Endothelial cell of umbilical vein (primary cell): ENCODE measurements at regions of chr12 and their contacts with region 1.

Region 1: GRCh38 chr12:100554608-100555077 is 18.8 kb upstream of the GAS2L3 start:
- DNase-seq: peak; percentile 96
- H3K4me3 ChIP-seq: no peak overlapping the region
- H3K27ac ChIP-seq: no peak overlapping the region
- H3K4me1 ChIP-seq: peaks cover 3% of the 10 kb centered on the region
- H3K27me3 ChIP-seq: peaks cover 2% of the 10 kb centered on the region in 2 experiments
- CTCF ChIP-seq: peak; percentile 66
- POLR2A ChIP-seq: no peak

Region 2: GRCh38 chr12:99043319-99043914 is 1511.2 kb before region 1 on chr12:
- CTCF ChIA-PET with region 1: interaction called, 30 read pairs
- POLR2A ChIA-PET with region 1: no interaction called
- dilution Hi-C with region 1: no loop called
- intact Hi-C with region 1: loop called (anchors 1 kb)
- DNase-seq: peak; percentile 63
- H3K4me3 ChIP-seq: no peak overlapping the region
- H3K27ac ChIP-seq: no peak overlapping the region
- H3K4me1 ChIP-seq: no peaks in the 10 kb centered on the region
- H3K27me3 ChIP-seq: no peaks in the 10 kb centered on the region
- CTCF ChIP-seq: peak; percentile 64 to 79
- POLR2A ChIP-seq: no peak

Region 3: DNA sequence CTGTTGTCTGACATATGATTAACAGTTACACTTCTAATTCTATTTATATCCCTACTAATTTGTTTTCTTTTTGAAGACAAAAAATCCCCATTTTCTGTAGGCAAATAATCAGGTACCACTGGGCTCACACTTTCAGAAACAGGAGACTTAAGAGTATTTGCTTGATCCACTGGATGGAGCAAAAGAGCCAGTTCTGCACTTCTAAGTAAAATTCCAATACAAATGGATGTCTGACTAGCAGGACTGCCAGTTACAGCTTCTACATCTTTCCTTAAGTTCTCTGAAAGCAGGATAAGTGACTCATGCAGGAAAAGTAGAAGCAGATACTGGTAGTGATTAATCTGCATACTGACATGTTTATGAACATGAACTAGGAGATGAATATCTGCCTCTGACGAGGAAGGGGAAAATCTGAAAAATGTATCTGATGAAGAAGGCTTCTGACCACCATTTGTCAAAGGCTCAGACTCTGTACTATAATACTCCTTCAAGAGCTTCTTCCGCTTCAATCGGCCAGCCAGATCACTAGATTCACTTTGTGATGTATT is 496.1 kb before region 1 on chr12:
- CTCF ChIA-PET with region 1: interaction called, 10 read pairs
- POLR2A ChIA-PET with region 1: no interaction called
- dilution Hi-C with region 1: no loop called
- intact Hi-C with region 1: loop called (anchors 1 kb)
- DNase-seq: peak; percentile 94
- H3K4me3 ChIP-seq: no peak overlapping the region
- H3K27ac ChIP-seq: peak overlapping the region; percentile 58
- H3K4me1 ChIP-seq: peaks cover 14% of the 10 kb centered on the region
- H3K27me3 ChIP-seq: no peaks in the 10 kb centered on the region
- CTCF ChIP-seq: peak; percentile 24 to 35
- POLR2A ChIP-seq: peak; percentile 35

Region 4: GRCh38 chr12:100154474-100155247 is 400.0 kb before region 1 on chr12:
- CTCF ChIA-PET with region 1: interaction called, 8 read pairs
- POLR2A ChIA-PET with region 1: no interaction called
- dilution Hi-C with region 1: no loop called
- intact Hi-C with region 1: loop called (anchors 1 kb)
- DNase-seq: peak; percentile 51
- H3K4me3 ChIP-seq: no peak overlapping the region
- H3K27ac ChIP-seq: no peak overlapping the region
- H3K4me1 ChIP-seq: no peaks in the 10 kb centered on the region
- H3K27me3 ChIP-seq: no peaks in the 10 kb centered on the region
- CTCF ChIP-seq: peak; percentile 91 to 93
- POLR2A ChIP-seq: no peak

Region 5: GRCh38 chr12:100348657-100349454 is 205.8 kb before region 1 on chr12:
- CTCF ChIA-PET with region 1: interaction called, 33 read pairs
- POLR2A ChIA-PET with region 1: no interaction called
- dilution Hi-C with region 1: no loop called
- intact Hi-C with region 1: loop called (anchors 1 kb)
- DNase-seq: peak; percentile 37
- H3K4me3 ChIP-seq: no peak overlapping the region
- H3K27ac ChIP-seq: no peak overlapping the region
- H3K4me1 ChIP-seq: no peaks in the 10 kb centered on the region
- H3K27me3 ChIP-seq: peaks cover 0 to 2% of the 10 kb centered on the region in 2 experiments
- CTCF ChIP-seq: no peak
- POLR2A ChIP-seq: no peak

Region 6: DNA sequence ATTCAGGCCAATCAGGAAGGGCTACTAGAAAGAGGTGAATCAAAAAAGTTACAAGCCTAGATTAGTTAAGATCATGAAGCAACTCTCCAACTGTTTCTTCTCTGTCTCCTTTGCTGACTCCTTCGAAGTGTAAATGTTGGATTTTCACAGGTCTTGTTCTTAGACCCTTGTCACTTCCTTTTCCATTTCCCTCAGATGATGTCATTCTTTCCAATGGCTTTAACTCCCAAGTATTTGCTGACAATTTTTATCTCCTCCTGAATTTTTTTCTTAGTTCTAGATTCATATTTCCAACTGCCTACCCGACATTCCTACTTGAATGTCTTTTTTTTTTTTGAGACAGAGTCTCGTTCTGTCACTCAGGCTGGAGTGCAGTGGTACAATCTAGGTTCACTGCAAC is 29.6 kb after region 1 on chr12:
- CTCF ChIA-PET with region 1: no interaction called
- POLR2A ChIA-PET with region 1: no interaction called
- dilution Hi-C with region 1: no loop called
- intact Hi-C with region 1: no loop called
- DNase-seq: peak; percentile 71
- H3K4me3 ChIP-seq: no peak overlapping the region
- H3K27ac ChIP-seq: peak overlapping the region; percentile 27
- H3K4me1 ChIP-seq: peaks cover 13% of the 10 kb centered on the region
- H3K27me3 ChIP-seq: no peaks in the 10 kb centered on the region
- CTCF ChIP-seq: no peak
- POLR2A ChIP-seq: no peak

Region 7: GRCh38 chr12:100668945-100669536 is 114.4 kb after region 1 on chr12:
- CTCF ChIA-PET with region 1: interaction called, 4 read pairs
- POLR2A ChIA-PET with region 1: no interaction called
- dilution Hi-C with region 1: no loop called
- intact Hi-C with region 1: loop called (anchors 1 kb)
- DNase-seq: peak; percentile 71
- H3K4me3 ChIP-seq: no peak overlapping the region
- H3K27ac ChIP-seq: no peak overlapping the region
- H3K4me1 ChIP-seq: no peaks in the 10 kb centered on the region
- H3K27me3 ChIP-seq: peaks cover 0 to 8% of the 10 kb centered on the region in 2 experiments
- CTCF ChIP-seq: peak; percentile 89 to 92
- POLR2A ChIP-seq: no peak

Region 8: DNA sequence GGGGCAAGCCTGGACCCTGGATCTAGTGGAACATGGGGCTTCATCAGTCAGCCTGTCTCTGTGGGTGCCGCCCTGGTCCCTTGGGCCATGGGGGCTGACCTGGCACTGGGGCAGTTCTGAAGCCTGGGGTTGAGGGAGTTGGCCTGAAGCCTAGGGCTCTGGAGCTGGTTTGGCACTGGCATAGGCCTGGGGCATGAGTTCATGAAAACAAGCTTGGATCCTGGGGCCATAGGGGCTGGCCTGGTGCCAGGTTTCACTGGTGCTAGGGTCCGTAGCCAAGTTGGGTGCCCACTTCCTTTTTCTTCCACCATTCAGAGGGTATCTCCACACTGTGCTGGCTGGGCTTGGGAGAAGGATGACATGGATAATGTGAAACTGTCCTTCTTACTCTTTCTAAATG is 213.3 kb after region 1 on chr12:
- CTCF ChIA-PET with region 1: no interaction called
- POLR2A ChIA-PET with region 1: no interaction called
- dilution Hi-C with region 1: no loop called
- intact Hi-C with region 1: no loop called
- DNase-seq: no peak
- H3K4me3 ChIP-seq: no peak overlapping the region
- H3K27ac ChIP-seq: no peak overlapping the region
- H3K4me1 ChIP-seq: no peaks in the 10 kb centered on the region
- H3K27me3 ChIP-seq: no peaks in the 10 kb centered on the region
- CTCF ChIP-seq: no peak
- POLR2A ChIP-seq: no peak